WTC11 (cell line): ENCODE measurements at regions of chr15 and their contacts with region 1.

Region 1: DNA sequence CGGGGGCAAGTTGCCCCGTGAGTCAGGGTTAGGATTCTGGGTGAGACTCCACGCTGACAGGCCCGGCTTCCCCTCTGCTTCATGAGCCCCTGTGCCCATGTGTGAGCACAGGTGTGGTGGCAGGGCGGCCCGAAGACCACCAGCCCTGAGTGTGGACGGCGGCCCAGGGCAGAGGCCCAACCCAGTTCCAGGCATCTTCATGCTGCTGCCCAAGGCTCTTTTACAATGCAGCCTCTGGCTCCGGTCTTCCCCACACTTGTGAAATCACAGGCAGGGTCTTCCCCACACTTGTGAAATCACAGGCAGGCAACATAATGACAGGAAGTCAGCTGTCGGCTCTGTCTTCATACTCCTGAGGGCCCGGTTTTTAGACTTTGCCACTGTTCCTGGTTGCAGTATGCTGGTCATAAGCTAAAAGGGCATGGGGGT is 78.8 kb downstream of the AAGAB start:
- DNase-seq: no peak
- ATAC-seq: no peak
- H3K4me3 Mint-ChIP-seq: no peak overlapping the region
- H3K27ac Mint-ChIP-seq: no peak overlapping the region
- H3K4me1 Mint-ChIP-seq: peaks cover 34% of the 10 kb centered on the region
- H3K27me3 Mint-ChIP-seq: no peaks in the 10 kb centered on the region
- CTCF ChIP-seq: no peak

Region 2: GRCh38 chr15:67165254-67166253 is 10.1 kb before region 1 on chr15:
- CTCF ChIA-PET with region 1: interaction called, 11 read pairs
- POLR2A ChIA-PET with region 1: no interaction called
- DNase-seq: peak; percentile 45
- ATAC-seq: peak; percentile 85
- H3K4me3 Mint-ChIP-seq: peak overlapping the region; percentile 47
- H3K27ac Mint-ChIP-seq: peak overlapping the region; percentile 97
- H3K4me1 Mint-ChIP-seq: peaks cover 82% of the 10 kb centered on the region
- H3K27me3 Mint-ChIP-seq: no peaks in the 10 kb centered on the region
- CTCF ChIP-seq: no peak

Region 3: GRCh38 chr15:67613708-67614107 is 438.1 kb after region 1 on chr15:
- CTCF ChIA-PET with region 1: no interaction called
- POLR2A ChIA-PET with region 1: no interaction called
- DNase-seq: no peak
- ATAC-seq: peak; percentile 60
- H3K4me3 Mint-ChIP-seq: no peak overlapping the region
- H3K27ac Mint-ChIP-seq: no peak overlapping the region
- H3K4me1 Mint-ChIP-seq: peaks cover 8% of the 10 kb centered on the region; the same call in 1 of the 2 replicates
- H3K27me3 Mint-ChIP-seq: no peaks in the 10 kb centered on the region
- CTCF ChIP-seq: no peak